ENCODE measurements at regions of chr17 and their contacts with region 1.

Region 1: DNA sequence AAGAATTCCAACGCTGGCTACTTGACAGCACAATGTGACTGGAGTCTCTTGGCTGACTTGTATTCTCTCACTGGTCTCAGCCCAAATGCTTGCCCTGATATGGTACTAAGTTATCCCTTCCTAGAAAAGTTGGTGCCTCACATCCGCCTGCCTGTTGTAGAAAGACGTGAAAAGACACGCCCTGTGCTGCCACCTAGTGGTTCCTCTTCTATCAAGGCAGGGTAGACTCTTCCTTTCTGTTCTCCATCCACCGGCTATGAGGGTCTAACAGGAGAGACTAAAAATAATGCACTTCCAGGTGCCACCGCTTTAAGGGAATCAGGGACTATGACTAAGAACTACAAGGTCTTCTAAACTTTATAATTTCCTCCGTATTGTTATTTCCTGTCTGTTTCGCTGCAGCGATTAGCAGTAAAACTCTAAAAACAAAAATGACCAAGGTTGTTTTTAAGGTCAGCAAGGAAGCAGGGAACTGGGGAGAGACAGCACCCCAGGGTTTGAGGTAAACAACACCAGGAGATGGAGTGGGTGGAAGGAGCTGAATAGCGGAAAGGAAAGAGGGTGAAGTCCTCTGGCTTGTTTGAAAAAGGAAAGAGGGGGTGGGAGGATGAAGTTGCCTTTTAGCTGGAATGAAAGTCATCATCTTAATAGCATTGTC is 109.5 kb downstream of the YPEL2 start:
- DNase-seq: peak; percentile 98
- ATAC-seq: peak; percentile 96
- H3K4me3 Mint-ChIP-seq: peak overlapping the region; percentile 56
- H3K27ac Mint-ChIP-seq: peak overlapping the region; percentile 91
- H3K4me1 Mint-ChIP-seq: peaks cover 45% of the 10 kb centered on the region
- H3K27me3 Mint-ChIP-seq: no peaks in the 10 kb centered on the region
- CTCF ChIP-seq: peak; percentile 81

Region 2: GRCh38 chr17:59311130-59311920 is 129.6 kb before region 1 on chr17:
- CTCF ChIA-PET with region 1: interaction called, 226 read pairs
- POLR2A ChIA-PET with region 1: interaction called, 5 read pairs
- intact Hi-C with region 1: loop called (anchors 1 kb)
- DNase-seq: peak; percentile 51
- ATAC-seq: peak; percentile 99
- H3K4me3 Mint-ChIP-seq: no peak overlapping the region
- H3K27ac Mint-ChIP-seq: no peak overlapping the region
- H3K4me1 Mint-ChIP-seq: no peaks in the 10 kb centered on the region
- H3K27me3 Mint-ChIP-seq: no peaks in the 10 kb centered on the region
- CTCF ChIP-seq: peak; percentile 96

Region 3: GRCh38 chr17:59361916-59362810 is 78.8 kb before region 1 on chr17:
- CTCF ChIA-PET with region 1: interaction called, 11 read pairs
- POLR2A ChIA-PET with region 1: interaction called, 5 read pairs
- intact Hi-C with region 1: no loop called
- DNase-seq: peak; percentile 65
- ATAC-seq: peak; percentile 65
- H3K4me3 Mint-ChIP-seq: peak overlapping the region; percentile 62
- H3K27ac Mint-ChIP-seq: peak overlapping the region; percentile 90
- H3K4me1 Mint-ChIP-seq: peaks cover 79% of the 10 kb centered on the region
- H3K27me3 Mint-ChIP-seq: no peaks in the 10 kb centered on the region
- CTCF ChIP-seq: no peak

Region 4: DNA sequence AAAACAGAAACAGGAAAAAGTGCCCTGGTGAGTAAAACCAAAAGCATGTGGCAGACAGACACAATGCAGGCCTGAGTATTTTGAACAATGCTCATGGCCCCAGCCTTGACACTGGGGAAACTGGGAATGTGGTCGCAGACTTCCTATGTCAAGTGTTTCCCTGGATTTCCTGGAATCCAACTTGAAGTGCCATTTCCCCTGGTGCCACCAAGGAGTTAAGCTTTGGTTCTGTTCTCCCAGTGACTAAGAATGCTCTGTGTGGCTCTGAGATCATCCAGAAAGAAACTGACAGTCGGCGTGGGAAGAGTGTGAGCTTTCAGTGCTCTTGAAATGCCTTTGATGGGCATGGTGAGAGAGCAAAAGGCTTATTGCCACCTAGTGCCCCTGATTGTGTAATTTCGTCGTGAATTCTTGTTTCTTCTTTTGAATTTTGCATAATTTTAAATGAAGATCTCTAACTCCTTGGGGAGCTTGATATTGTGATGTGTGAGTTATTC is 13.4 kb before region 1 on chr17:
- CTCF ChIA-PET with region 1: interaction called, 116 read pairs
- POLR2A ChIA-PET with region 1: interaction called, 4 read pairs
- intact Hi-C with region 1: no loop called
- DNase-seq: peak; percentile 84
- ATAC-seq: peak; percentile 98
- H3K4me3 Mint-ChIP-seq: no peak overlapping the region
- H3K27ac Mint-ChIP-seq: peak overlapping the region; percentile 9
- H3K4me1 Mint-ChIP-seq: peaks cover 20% of the 10 kb centered on the region
- H3K27me3 Mint-ChIP-seq: peaks cover 1% of the 10 kb centered on the region
- CTCF ChIP-seq: peak; percentile 33

Region 5: GRCh38 chr17:59451706-59452105 is 10.8 kb after region 1 on chr17:
- CTCF ChIA-PET with region 1: interaction called, 23 read pairs
- POLR2A ChIA-PET with region 1: interaction called, 3 read pairs
- intact Hi-C with region 1: no loop called
- DNase-seq: no peak
- ATAC-seq: no peak
- H3K4me3 Mint-ChIP-seq: no peak overlapping the region
- H3K27ac Mint-ChIP-seq: no peak overlapping the region
- H3K4me1 Mint-ChIP-seq: no peaks in the 10 kb centered on the region
- H3K27me3 Mint-ChIP-seq: no peaks in the 10 kb centered on the region
- CTCF ChIP-seq: no peak

Region 6: DNA sequence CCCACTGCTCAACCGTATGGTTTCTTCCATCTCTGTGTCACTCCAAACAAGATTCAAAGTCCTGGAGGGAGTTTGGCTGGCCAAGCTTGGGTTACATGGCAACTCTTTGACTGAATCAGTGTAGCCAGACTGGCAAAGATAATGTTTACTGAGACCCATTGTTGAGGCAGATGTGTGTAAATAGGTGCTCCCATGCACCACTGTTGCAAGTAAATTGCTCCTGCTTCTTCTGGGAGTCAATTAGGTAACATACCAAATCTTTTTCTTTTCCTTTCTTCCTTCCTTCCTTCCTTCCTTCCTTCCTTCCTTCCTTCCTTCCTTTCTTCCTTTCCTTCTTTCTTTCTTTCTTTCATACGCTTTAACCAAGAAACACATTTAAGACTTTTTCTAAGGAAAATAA is 38.2 kb after region 1 on chr17:
- CTCF ChIA-PET with region 1: no interaction called
- POLR2A ChIA-PET with region 1: no interaction called
- intact Hi-C with region 1: no loop called
- DNase-seq: no peak
- ATAC-seq: no peak
- H3K4me3 Mint-ChIP-seq: no peak overlapping the region
- H3K27ac Mint-ChIP-seq: no peak overlapping the region
- H3K4me1 Mint-ChIP-seq: peaks cover 7% of the 10 kb centered on the region
- H3K27me3 Mint-ChIP-seq: no peaks in the 10 kb centered on the region
- CTCF ChIP-seq: no peak

Region 7: DNA sequence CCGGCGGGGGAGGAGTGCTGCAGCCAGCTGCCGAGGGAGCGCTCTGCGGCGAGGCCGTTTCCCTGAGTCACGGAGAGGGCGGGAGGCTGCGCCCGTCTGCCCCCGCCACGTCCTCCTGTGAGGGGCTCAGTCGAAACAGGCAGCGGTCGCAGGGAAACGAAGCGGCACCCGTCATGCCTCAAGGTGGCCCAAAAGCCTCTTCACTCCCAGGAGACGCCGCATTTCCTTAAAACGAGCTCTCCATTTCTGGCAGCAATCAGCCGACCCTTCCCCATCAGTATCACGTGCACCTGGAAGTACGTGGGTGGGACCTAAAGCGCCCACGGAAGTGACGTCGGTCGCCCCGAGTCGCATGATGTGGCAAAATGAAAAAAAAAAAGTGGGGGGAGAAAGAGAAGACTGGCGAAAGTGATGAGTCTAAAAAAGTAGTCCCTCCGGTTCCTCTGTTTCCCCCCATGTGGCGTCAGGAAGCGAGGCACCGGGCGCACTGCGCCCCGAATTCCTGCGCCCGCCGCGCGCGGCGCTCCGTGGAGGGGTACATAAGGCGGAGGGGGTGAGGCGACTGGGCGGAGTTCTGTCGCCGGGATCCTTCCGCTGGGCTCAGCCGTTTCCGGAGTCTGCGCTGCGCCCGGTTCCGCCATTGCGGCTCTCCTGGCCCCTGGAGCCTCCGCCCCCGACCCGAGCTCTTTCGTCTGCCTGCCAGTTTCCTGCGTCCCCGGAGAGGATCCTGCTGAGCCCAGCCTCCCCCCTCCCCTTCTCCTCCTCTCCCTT is 178.6 kb after region 1 on chr17 and contains the start of gene CLTC:
- CTCF ChIA-PET with region 1: no interaction called
- POLR2A ChIA-PET with region 1: no interaction called
- intact Hi-C with region 1: no loop called
- DNase-seq: peak; percentile 97
- ATAC-seq: peak; percentile 84
- H3K4me3 Mint-ChIP-seq: peak within 1 kb of the TSS; percentile 98
- H3K27ac Mint-ChIP-seq: peak within 1 kb of the TSS; percentile 98
- H3K4me1 Mint-ChIP-seq: peaks cover 45% of the 10 kb centered on the region
- H3K27me3 Mint-ChIP-seq: no peaks in the 10 kb centered on the region
- CTCF ChIP-seq: no peak
- total RNA-seq, gene CLTC: 137 to 142 TPM